ENCODE measurements at regions of chr2 and their contacts with region 1.

Region 1: GRCh38 chr2:42095923-42096408 is 48.1 kb downstream of the PKDCC start:
- DNase-seq: peak; percentile 67 to 90 (median 74)
- ATAC-seq: peak in 1 of 2 donors; percentile 54
- H3K4me3 ChIP-seq: no peak overlapping the region
- H3K27ac ChIP-seq: no peak overlapping the region
- H3K4me1 ChIP-seq: peaks cover 6% of the 10 kb centered on the region
- H3K27me3 ChIP-seq: no peaks in the 10 kb centered on the region

Region 2: GRCh38 chr2:41922177-41922576 is 173.8 kb before region 1 on chr2:
- intact Hi-C with region 1: no loop called
- DNase-seq: peak in 1 of 3 donors; percentile 71
- ATAC-seq: peak; percentile 66 to 75
- H3K4me3 ChIP-seq: no peak overlapping the region
- H3K27ac ChIP-seq: peak overlapping the region; percentile 79
- H3K4me1 ChIP-seq: peaks cover 27% of the 10 kb centered on the region
- H3K27me3 ChIP-seq: no peaks in the 10 kb centered on the region

Region 3: DNA sequence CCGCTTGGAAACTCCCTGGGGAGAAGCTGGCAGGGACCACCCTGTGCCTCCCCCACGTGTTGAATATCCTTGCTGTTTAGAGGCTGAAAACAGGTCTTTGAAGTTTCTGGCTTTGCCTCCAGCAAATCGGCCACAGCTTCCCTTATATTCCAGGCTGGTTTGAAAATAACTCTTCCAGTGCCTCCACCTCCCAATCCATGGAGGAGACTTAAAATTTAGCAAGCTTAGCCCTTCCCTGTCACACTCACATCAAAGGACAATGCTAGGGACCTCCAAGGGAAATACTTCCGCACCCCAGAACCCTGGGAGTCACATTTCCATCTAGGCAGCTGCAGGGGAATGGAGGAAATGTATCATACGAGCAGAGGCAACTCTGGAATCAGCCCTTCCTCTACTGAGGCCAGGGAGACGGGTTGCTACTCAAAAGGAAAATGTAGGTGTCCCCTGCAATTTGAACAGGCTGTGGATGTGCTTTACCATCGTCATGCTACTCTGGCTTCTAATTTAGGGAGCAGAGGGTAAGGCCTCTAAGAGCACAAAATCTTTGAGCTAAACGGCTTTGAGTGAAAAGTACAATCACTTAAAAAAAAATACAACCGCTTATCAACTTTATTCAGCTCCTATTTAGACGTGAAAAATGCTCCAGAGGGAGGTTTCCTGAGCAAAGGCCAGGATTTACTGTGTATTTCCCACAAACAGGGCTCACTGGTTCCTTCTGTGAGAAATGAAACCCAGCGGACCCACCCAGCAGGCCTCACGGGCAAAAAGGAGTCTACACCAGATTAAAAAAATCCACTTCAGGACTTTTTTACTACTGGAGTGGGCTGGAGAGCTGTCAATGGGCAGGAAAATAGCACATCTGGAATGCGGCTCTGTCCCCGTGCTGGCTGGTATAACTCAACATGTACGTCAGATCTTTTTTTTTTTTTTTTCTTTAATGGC is 97.5 kb before region 1 on chr2:
- intact Hi-C with region 1: no loop called
- DNase-seq: peak; percentile 56 to 82 (median 71)
- ATAC-seq: peak; percentile 80 to 82
- H3K4me3 ChIP-seq: no peak overlapping the region
- H3K27ac ChIP-seq: peak overlapping the region; percentile 93
- H3K4me1 ChIP-seq: peaks cover 5% of the 10 kb centered on the region
- H3K27me3 ChIP-seq: no peaks in the 10 kb centered on the region

Region 4: DNA sequence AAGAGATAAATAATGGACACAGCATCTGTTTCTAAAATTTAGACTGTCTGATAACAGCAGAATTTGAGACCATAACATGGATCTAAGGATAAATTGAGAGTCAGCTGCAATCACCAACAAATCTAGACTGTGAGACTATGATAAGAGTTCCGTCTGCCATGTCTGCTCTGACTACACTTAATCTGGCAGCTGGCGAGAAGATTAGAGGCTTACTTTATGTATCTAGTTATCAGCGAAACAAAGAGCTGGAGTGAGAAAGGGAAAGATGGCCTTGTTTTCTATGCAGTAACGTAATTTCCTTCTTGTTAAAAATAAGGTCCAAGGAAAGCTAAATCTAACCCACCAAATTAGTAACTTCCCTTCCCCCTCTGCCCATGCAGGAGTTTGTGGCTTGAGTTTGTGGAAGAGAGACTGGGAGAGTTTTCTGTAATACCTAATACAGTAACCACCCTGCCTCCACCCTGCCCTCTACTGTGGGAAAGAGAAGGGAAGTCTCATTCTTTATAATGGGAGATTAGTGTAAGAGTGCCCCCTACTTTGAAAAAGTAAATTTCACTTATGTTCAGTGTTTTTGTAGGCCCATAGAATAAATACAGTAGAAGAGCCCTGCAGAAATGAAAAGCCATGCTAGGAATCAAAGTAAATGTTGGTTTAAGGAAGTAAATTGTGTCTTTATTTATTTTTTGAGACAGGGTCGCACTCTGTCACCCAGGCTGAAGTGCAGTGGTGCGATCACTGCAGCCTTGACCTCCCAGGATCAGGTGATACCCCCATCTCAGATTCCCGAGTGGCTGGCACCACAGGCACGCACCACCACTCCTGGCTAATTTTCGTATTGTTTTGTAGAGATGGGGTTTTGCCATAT is 100.7 kb after region 1 on chr2:
- intact Hi-C with region 1: loop called in 2 of 4 experiments (anchors 2 to 10 kb)
- DNase-seq: peak in 2 of 3 donors; percentile 28 to 46
- ATAC-seq: peak; percentile 71 to 86
- H3K4me3 ChIP-seq: no peak overlapping the region
- H3K27ac ChIP-seq: no peak overlapping the region
- H3K4me1 ChIP-seq: peaks cover 2% of the 10 kb centered on the region
- H3K27me3 ChIP-seq: no peaks in the 10 kb centered on the region

Region 5: DNA sequence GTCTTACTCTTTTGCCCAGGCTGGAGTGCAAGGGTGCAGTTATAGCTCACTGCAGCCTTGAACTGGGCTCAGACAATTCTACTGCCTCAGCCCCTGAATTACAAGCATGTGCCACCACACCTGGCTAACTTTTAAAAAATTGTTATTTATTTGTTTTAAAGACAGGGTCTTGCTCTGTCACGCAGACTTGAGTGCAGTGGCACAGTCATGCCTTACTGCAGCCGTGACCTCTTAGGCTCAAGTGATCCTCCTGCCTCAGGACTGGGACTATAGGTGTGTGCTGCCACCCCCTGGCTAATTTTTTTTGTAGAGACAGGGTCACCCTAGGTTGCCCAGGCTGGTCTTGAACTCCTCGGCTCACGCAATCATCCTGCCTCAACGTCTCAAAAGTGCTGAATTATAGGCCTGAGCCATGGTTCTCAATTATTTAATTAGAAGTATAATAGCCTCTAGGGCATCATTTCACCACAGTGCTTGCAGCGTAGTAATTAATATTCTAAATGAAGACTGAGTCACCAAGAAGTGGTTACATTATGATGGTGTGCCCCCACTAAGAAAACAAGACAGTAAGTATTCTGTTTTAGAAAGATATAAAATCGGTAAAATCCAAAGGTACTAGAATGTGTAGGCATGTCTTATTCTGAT is 142.8 kb after region 1 on chr2:
- intact Hi-C with region 1: loop called in 2 of 4 experiments (anchors 5 kb)
- DNase-seq: peak in 1 of 3 donors; percentile 41
- ATAC-seq: peak; percentile 87
- H3K4me3 ChIP-seq: no peak overlapping the region
- H3K27ac ChIP-seq: no peak overlapping the region
- H3K4me1 ChIP-seq: peaks cover 2% of the 10 kb centered on the region
- H3K27me3 ChIP-seq: no peaks in the 10 kb centered on the region

Region 6: GRCh38 chr2:42328148-42328833 is 232.3 kb after region 1 on chr2:
- intact Hi-C with region 1: loop called (anchors 5 to 10 kb)
- DNase-seq: no peak
- ATAC-seq: no peak
- H3K4me3 ChIP-seq: no peak overlapping the region
- H3K27ac ChIP-seq: no peak overlapping the region
- H3K4me1 ChIP-seq: no peaks in the 10 kb centered on the region
- H3K27me3 ChIP-seq: no peaks in the 10 kb centered on the region

Region 7: DNA sequence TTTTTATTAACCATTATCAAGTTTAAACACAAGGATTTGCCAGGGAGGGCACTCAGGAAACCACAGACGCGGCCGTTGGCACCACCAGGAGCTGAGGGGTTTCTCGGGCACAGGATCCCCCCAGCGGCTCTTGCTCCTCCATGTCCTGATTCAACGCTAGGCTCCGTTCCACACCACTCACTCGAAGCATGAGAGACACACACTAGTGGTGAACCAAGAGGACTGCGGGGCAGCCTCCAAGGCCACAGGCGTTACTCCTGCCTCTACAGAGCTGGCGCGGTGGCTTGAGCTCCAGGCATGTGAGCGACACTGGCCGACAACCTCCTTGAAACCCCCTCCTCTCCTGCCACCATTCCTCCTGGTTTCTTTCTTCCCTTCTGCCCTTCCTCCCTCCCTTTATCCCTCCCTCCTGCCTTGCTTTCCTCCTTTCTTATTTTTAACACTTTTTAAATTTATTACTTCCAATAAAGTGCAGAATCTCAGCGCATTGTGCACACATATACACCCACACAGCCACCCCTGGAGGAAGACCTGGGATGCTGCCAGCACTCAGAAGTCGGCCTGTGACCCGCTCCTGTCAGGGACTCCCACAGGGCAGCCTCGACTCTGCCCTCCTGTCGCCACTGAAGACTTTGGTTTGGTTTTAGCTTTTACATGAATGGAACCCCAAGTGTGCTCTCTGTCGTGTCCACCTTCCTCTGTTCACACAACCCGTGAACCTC is 243.4 kb after region 1 on chr2:
- intact Hi-C with region 1: loop called in 2 of 4 experiments (anchors 5 to 10 kb)
- DNase-seq: no peak
- ATAC-seq: no peak
- H3K4me3 ChIP-seq: no peak overlapping the region
- H3K27ac ChIP-seq: no peak overlapping the region
- H3K4me1 ChIP-seq: peaks cover 13% of the 10 kb centered on the region
- H3K27me3 ChIP-seq: no peaks in the 10 kb centered on the region

Region 8: GRCh38 chr2:42360890-42361727 is 265.1 kb after region 1 on chr2 and contains the start of gene COX7A2L:
- intact Hi-C with region 1: loop called in 1 of 4 experiments (anchors 5 kb)
- DNase-seq: peak; percentile 97 to 98 (median 98)
- ATAC-seq: peak; percentile 99
- H3K4me3 ChIP-seq: peak within 1 kb of the TSS; percentile 79
- H3K27ac ChIP-seq: peak within 1 kb of the TSS; percentile 90
- H3K4me1 ChIP-seq: peaks cover 1% of the 10 kb centered on the region
- H3K27me3 ChIP-seq: no peaks in the 10 kb centered on the region
- total RNA-seq, gene COX7A2L: 96.1 to 128 (median 108) TPM

Measured in right cardiac atrium (tissue), 5 donors.